ENCODE measurements at regions of chr16 and their contacts with region 1.

Region 1: GRCh38 chr16:82229796-82230619 is 60.0 kb upstream of the MPHOSPH6 start:
- DNase-seq: peak; percentile 77

Region 2: DNA sequence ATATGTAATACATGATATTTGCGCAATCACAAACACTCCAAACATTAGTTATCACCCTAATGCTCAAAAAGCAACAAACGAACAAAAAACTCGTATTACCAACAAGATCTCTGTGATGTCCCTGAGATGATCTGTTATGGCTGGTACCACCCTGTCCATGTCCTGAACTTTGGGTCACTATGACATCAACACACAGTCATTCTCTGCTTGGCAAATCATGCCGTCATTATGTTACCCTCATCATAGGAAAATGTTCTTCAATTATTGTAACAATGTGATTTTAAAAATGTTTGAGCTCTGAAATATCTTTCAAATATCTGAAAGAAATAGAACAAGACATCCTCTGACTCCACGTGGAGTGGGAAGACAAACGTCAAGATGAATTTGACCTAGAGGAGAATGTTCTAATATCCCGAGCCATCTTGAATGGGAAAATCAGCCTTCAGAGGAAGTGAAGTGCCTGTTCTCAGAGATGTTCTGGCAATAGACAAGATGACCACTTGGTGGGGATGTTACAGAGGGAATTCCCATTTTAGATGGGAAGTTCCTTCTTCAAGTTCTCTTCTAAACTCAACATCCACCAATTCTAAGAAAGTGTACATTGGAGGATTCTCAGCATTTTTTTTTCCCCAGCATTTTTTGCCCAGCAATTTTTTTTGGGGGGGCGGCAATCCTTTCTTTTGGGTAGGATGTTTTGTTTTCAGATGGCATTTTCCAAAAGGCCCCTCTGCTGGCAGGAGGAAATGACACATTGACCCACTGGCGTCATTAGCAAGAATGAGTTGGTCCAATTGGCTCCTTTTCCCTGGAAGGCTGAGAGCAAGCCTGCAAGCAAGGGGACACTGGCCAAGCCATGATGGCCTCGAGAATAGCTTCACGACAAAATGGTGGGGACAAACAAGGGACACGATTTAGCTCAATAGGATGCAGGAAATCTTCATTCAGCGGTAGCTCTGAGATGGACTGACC is 198.6 kb before region 1 on chr16:
- in situ Hi-C with region 1: loop called (anchors 25 kb)
- DNase-seq: peak; percentile 79

Region 3: GRCh38 chr16:82192665-82193064 is 37.3 kb before region 1 on chr16:
- in situ Hi-C with region 1: no loop called
- DNase-seq: no peak

Measured in ACHN (cell line).